ENCODE measurements at regions of chr2 and their contacts with region 1.

Region 1: DNA sequence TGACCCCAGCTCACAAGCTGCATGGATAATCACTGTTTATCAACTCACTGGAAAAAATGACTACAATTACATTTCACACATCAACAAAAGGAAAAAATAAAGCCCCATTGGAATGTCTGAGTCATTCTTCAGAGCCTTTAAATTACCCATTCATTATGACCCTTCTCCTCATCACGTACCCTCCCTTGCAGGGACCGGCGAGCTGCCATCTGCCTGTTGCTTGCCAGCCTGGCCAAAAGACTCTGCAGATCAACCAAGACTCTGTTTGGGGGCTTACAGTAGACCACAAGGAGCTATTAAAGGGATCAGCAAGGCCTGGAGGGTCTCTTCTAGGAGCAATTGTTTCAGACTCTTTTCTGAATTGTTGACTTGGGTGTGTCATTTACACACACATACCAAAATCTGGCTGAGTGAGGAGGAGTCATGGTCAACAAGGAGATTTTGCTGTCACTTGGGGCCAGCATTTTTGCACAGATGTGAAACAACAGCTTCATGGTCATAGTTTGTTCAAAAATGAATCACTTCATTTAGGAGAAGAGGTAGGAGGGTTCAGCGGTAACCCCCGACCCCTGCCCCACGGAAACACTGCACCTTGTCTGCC is 42.0 kb downstream of the LBH start:
- DNase-seq: peak in 1 of 2 donors; percentile 60
- ATAC-seq: no peak
- H3K4me3 ChIP-seq: no peak overlapping the region
- H3K27ac ChIP-seq: peak overlapping the region in 1 of 2 donors; percentile 26
- H3K4me1 ChIP-seq: no peaks in the 10 kb centered on the region
- H3K27me3 ChIP-seq: no peaks in the 10 kb centered on the region

Region 2: GRCh38 chr2:30346471-30347169 is 73.3 kb after region 1 on chr2:
- intact Hi-C with region 1: loop called in 1 of 2 experiments (anchors 5 kb)
- DNase-seq: peak; percentile 84 to 90
- ATAC-seq: peak; percentile 95
- H3K4me3 ChIP-seq: no peak overlapping the region
- H3K27ac ChIP-seq: peak overlapping the region in 1 of 2 donors; percentile 87
- H3K4me1 ChIP-seq: no peaks in the 10 kb centered on the region
- H3K27me3 ChIP-seq: no peaks in the 10 kb centered on the region